ENCODE measurements at regions of chr3 and their contacts with region 1.

Region 1: DNA sequence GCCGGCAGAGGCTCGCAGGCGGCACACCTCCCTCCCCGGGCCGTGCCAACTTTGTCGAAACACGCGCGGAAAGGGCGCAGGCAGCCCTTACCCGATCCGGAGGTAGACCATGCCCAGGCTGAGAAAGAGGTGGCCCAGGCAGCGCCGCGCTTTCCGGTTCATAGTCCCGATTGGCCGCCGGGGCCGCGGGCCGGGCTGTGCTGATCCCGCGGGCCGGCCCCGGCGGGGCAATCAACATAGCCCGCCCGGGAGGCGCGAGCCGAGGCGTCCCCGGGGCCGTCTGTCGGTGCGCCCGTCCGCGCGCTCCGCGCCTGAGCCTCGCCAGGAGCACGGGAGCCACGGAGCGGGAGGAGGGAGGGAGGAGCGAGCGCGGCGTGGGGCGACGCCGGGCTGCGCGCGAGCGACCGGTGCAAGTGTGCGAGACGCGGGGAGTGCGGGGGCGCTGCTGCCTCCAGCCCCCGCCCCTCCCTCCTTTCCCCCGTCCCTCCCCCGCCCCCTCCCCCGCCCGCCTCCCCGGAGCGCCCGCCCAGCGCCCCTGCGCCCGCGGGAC is at the start of gene WNT7A:
- DNase-seq: no peak
- H3K4me3 ChIP-seq: peak within 1 kb of the TSS; percentile 32 to 39
- H3K27ac ChIP-seq: no peak within 1 kb of the TSS
- H3K4me1 ChIP-seq: peaks cover 30% of the 10 kb centered on the region
- H3K27me3 ChIP-seq: peaks cover 3% of the 10 kb centered on the region
- CTCF ChIP-seq: no peak
- POLR2A ChIP-seq: no peak
- total RNA-seq, gene WNT7A: not detected

Region 2: DNA sequence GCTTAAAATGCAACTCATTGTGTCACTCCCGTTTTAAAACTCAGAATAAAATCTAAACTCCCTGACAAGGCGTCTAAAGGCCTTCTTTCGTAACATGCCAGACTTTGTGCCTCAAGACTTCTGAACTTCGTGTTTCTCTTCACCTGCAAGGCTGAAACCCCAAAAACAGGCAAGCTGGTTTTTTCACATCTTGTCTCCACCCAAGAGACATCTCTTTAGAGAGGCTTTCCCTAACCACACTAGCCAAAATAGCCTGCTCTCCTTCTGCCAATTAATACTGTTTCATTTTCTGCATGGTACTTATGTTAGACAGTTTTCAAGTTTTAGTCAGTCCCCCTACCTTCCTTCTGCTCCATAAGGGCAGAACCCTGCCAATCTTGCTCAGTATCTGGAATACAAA is 1257.4 kb before region 1 on chr3:
- intact Hi-C with region 1: loop called (anchors 5 kb)
- DNase-seq: no peak
- H3K4me3 ChIP-seq: no peak overlapping the region
- H3K27ac ChIP-seq: no peak overlapping the region
- H3K4me1 ChIP-seq: peaks cover 59% of the 10 kb centered on the region
- H3K27me3 ChIP-seq: no peaks in the 10 kb centered on the region
- CTCF ChIP-seq: no peak
- POLR2A ChIP-seq: no peak

Region 3: GRCh38 chr3:13687517-13687943 is 192.2 kb before region 1 on chr3:
- intact Hi-C with region 1: loop called (anchors 10 kb)
- DNase-seq: no peak
- H3K4me3 ChIP-seq: no peak overlapping the region
- H3K27ac ChIP-seq: no peak overlapping the region
- H3K4me1 ChIP-seq: no peaks in the 10 kb centered on the region
- H3K27me3 ChIP-seq: no peaks in the 10 kb centered on the region
- CTCF ChIP-seq: no peak
- POLR2A ChIP-seq: no peak

Measured in vagina (tissue), 2 donors.